Naive thymus-derived CD4-positive, alpha-beta T cell (primary cell): ENCODE measurements at regions of chr10 and their contacts with region 1.

Region 1: GRCh38 chr10:73743905-73744663 is at the start of gene SEC24C:
- DNase-seq: peak; percentile 87 to 97 (median 95)
- ATAC-seq: peak; percentile 93
- H3K4me3 ChIP-seq: peak within 1 kb of the TSS; percentile 93
- H3K4me3 Mint-ChIP-seq: peak within 1 kb of the TSS; percentile 92 to 100 (median 100)
- H3K27ac ChIP-seq: peak within 1 kb of the TSS; percentile 91
- H3K27ac Mint-ChIP-seq: peak within 1 kb of the TSS; percentile 98 to 100 (median 100)
- H3K4me1 ChIP-seq: peaks cover 22 to 27% of the 10 kb centered on the region in 2 donors
- H3K4me1 Mint-ChIP-seq: peaks cover 18 to 47% (median 39%) of the 10 kb centered on the region in 7 donors
- H3K27me3 ChIP-seq: no peaks in the 10 kb centered on the region
- H3K27me3 Mint-ChIP-seq: no peaks in the 10 kb centered on the region
- total RNA-seq, gene SEC24C: 68.7 to 122 (median 95.4) TPM

Region 2: GRCh38 chr10:73246783-73247508 is 497.1 kb before region 1 on chr10 and contains the start of gene DNAJC9:
- CTCF ChIA-PET with region 1: no interaction called
- POLR2A ChIA-PET with region 1: no interaction called
- intact Hi-C with region 1: loop called (anchors 1 to 5 kb)
- DNase-seq: peak; percentile 93 to 98 (median 96)
- ATAC-seq: peak; percentile 95
- H3K4me3 ChIP-seq: peak within 1 kb of the TSS; percentile 71
- H3K4me3 Mint-ChIP-seq: peak within 1 kb of the TSS; percentile 92 to 100 (median 97)
- H3K27ac ChIP-seq: peak within 1 kb of the TSS; percentile 86
- H3K27ac Mint-ChIP-seq: peak within 1 kb of the TSS; percentile 91 to 98 (median 96)
- H3K4me1 ChIP-seq: peaks cover 27 to 37% of the 10 kb centered on the region in 2 donors
- H3K4me1 Mint-ChIP-seq: peaks cover 30 to 69% (median 55%) of the 10 kb centered on the region in 7 donors
- H3K27me3 ChIP-seq: no peaks in the 10 kb centered on the region
- H3K27me3 Mint-ChIP-seq: no peaks in the 10 kb centered on the region
- total RNA-seq, gene DNAJC9: 14.5 to 47.7 (median 26.8) TPM

Region 3: DNA sequence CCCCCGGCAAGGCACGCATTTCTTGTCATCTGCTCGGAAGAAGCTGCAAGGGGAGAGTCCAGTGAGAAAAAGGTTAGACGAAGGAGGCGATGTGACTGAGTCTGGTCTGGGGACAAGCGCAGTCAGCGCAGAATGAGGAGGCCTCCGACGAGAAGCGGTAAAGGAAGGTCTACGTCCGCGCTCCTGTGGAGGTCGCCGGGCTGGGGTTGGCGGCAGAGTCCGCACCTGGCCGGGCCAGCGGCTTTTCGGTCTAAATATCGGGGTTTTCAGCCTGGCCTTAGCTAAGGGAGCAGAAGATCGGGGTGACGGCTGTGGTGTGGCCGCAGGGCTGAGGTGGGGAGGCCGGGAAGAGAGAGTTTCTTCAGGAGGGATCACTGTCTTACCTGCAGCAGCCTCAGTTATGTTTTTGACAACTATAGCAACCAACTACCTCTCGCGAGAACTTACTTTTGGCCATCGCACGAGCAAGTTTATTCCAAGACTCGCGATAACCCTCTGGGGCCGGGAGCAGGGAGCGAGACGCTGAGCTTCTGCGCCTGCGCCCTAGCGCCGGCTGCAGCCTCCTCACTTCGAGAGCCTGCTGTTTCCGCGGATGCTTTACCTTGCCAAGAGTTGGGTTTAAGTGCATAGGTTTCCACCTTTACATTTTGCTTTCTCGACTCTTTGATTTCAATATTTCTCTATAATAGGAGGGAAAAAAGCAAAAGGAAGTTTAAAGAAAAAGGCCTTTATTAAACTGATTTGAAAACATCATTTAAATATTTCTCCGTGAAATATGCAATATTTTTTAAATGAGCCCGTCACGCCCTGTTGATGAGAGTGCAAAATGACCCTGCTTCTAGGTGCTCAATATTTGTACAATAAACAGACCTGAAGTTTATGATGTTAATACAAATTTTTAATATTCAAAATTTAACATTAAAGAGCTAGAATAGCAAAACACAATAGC is 385.5 kb before region 1 on chr10 and contains the start of gene CFAP70:
- CTCF ChIA-PET with region 1: no interaction called
- POLR2A ChIA-PET with region 1: no interaction called
- intact Hi-C with region 1: loop called in 1 of 2 experiments (anchors 5 kb)
- DNase-seq: peak; percentile 79 to 97 (median 95)
- ATAC-seq: peak; percentile 97
- H3K4me3 ChIP-seq: peak within 1 kb of the TSS; percentile 70
- H3K4me3 Mint-ChIP-seq: peak within 1 kb of the TSS; percentile 91 to 99 (median 94)
- H3K27ac ChIP-seq: peak within 1 kb of the TSS; percentile 85
- H3K27ac Mint-ChIP-seq: peak within 1 kb of the TSS; percentile 92 to 99 (median 97)
- H3K4me1 ChIP-seq: peaks cover 4 to 5% of the 10 kb centered on the region in 2 donors
- H3K4me1 Mint-ChIP-seq: peaks cover 11 to 20% (median 18%) of the 10 kb centered on the region in 7 donors
- H3K27me3 ChIP-seq: no peaks in the 10 kb centered on the region
- H3K27me3 Mint-ChIP-seq: peaks cover 0 to 23% (median 0%) of the 10 kb centered on the region in 5 donors
- total RNA-seq, gene CFAP70: 0.80 to 5.4 (median 4.6) TPM

Region 4: DNA sequence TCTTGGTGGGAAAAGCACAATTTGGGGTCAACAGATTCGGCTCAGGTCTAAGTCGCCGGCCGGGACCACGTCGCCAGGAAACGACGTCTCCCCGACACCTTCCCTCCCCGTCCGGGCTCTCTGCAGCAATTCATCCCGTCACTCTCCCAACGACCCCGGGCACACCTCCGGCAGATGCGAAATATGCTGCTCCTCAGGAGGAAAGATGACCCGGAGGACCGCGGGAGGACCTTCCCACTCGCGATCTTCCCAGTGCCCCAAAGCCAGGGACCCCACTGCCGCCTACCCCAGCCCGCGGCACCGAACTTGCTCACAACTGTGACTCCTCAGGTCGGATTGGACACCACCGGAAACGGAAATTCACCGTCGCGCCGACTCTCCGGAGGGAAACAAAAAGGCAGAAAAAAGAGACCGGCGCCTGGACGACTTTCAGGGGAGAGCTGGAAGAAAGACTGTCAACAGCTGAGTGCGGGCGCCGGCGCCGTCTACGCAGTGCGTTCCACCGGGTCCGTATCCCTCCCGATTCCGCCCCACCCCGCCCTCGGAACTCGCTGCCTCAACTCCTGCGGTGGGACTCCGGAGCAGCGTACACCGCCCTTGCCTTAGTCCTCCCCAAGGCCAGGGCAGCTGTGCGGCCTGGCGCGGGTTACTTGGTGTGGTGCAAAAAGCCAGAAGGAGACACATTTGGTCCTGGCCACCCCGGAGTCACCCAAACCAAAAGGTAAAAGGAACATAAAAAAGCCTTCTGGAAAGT is 13.8 kb before region 1 on chr10:
- CTCF ChIA-PET with region 1: interaction called, 9 read pairs
- POLR2A ChIA-PET with region 1: interaction called, 79 read pairs
- intact Hi-C with region 1: loop called (anchors 1 kb)
- DNase-seq: peak; percentile 86 to 94 (median 89)
- ATAC-seq: peak; percentile 94
- H3K4me3 ChIP-seq: peak overlapping the region; percentile 99
- H3K4me3 Mint-ChIP-seq: peak overlapping the region; percentile 95 to 100 (median 98)
- H3K27ac ChIP-seq: peak overlapping the region; percentile 82
- H3K27ac Mint-ChIP-seq: peak overlapping the region; percentile 91 to 98 (median 96)
- H3K4me1 ChIP-seq: peaks cover 5 to 10% of the 10 kb centered on the region in 2 donors
- H3K4me1 Mint-ChIP-seq: peaks cover 0 to 32% (median 21%) of the 10 kb centered on the region in 7 donors
- H3K27me3 ChIP-seq: no peaks in the 10 kb centered on the region
- H3K27me3 Mint-ChIP-seq: no peaks in the 10 kb centered on the region

Region 5: DNA sequence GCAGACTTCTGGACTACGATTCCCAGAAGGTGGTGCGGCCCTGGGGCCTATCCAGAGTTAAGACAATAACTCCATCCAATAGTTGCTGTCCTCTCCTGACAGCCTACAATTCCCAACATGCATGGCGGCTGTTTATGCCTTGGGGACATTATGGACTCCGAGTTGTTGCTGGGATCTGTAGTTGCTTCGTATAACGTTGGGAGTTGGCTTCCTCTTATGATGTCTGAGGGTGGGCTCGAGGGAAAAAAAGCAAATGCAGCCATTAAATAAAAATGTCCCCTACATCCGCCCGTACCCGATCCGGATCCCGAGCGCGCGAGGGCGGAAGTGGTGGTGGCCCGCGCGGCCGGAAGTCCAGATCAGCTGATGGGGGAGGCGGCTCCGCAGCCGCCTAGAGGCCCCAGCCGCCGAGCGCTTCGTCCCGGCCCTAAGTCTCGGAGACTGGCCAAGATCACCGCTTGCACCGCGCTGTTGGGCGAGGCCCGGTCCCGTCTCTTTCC is 41.2 kb after region 1 on chr10 and contains the start of gene ZSWIM8:
- CTCF ChIA-PET with region 1: no interaction called
- POLR2A ChIA-PET with region 1: interaction called, 26 read pairs
- intact Hi-C with region 1: loop called (anchors 1 kb)
- DNase-seq: peak; percentile 70 to 93 (median 86)
- ATAC-seq: peak; percentile 91
- H3K4me3 ChIP-seq: peak within 1 kb of the TSS; percentile 91
- H3K4me3 Mint-ChIP-seq: peak within 1 kb of the TSS; percentile 97 to 100 (median 98)
- H3K27ac ChIP-seq: peak within 1 kb of the TSS; percentile 83
- H3K27ac Mint-ChIP-seq: peak within 1 kb of the TSS; percentile 95 to 99 (median 98)
- H3K4me1 ChIP-seq: peaks cover 36 to 43% of the 10 kb centered on the region in 2 donors
- H3K4me1 Mint-ChIP-seq: peaks cover 27 to 66% (median 53%) of the 10 kb centered on the region in 7 donors
- H3K27me3 ChIP-seq: no peaks in the 10 kb centered on the region
- H3K27me3 Mint-ChIP-seq: no peaks in the 10 kb centered on the region
- total RNA-seq, gene ZSWIM8: 70.9 to 102 (median 83.2) TPM

Region 6: GRCh38 chr10:73874267-73875138 is 130.4 kb after region 1 on chr10 and contains the start of gene CAMK2G:
- CTCF ChIA-PET with region 1: no interaction called
- POLR2A ChIA-PET with region 1: interaction called, 6 read pairs
- intact Hi-C with region 1: loop called in 1 of 2 experiments (anchors 1 kb)
- DNase-seq: peak; percentile 68 to 86 (median 83)
- ATAC-seq: peak; percentile 91
- H3K4me3 ChIP-seq: peak within 1 kb of the TSS; percentile 94
- H3K4me3 Mint-ChIP-seq: peak within 1 kb of the TSS; percentile 83 to 96 (median 90)
- H3K27ac ChIP-seq: peak within 1 kb of the TSS; percentile 86
- H3K27ac Mint-ChIP-seq: peak within 1 kb of the TSS; percentile 81 to 97 (median 94)
- H3K4me1 ChIP-seq: peaks cover 30 to 48% of the 10 kb centered on the region in 2 donors
- H3K4me1 Mint-ChIP-seq: peaks cover 41 to 84% (median 74%) of the 10 kb centered on the region in 7 donors
- H3K27me3 ChIP-seq: no peaks in the 10 kb centered on the region
- H3K27me3 Mint-ChIP-seq: peaks cover 0 to 2% (median 0%) of the 10 kb centered on the region in 5 donors
- total RNA-seq, gene CAMK2G: 44.6 to 70.9 (median 61.9) TPM

Region 7: GRCh38 chr10:75210282-75211006 is 1466.4 kb after region 1 on chr10 and contains the start of gene VDAC2:
- CTCF ChIA-PET with region 1: no interaction called
- POLR2A ChIA-PET with region 1: no interaction called
- intact Hi-C with region 1: loop called in 1 of 2 experiments (anchors 10 kb)
- DNase-seq: peak; percentile 92 to 100 (median 98)
- ATAC-seq: peak; percentile 92
- H3K4me3 ChIP-seq: peak within 1 kb of the TSS; percentile 81
- H3K4me3 Mint-ChIP-seq: peak within 1 kb of the TSS; percentile 87 to 100 (median 98)
- H3K27ac ChIP-seq: peak within 1 kb of the TSS; percentile 96
- H3K27ac Mint-ChIP-seq: peak within 1 kb of the TSS; percentile 99 to 100 (median 100)
- H3K4me1 ChIP-seq: peaks cover 15 to 21% of the 10 kb centered on the region in 2 donors
- H3K4me1 Mint-ChIP-seq: peaks cover 21 to 44% (median 29%) of the 10 kb centered on the region in 7 donors
- H3K27me3 ChIP-seq: no peaks in the 10 kb centered on the region
- H3K27me3 Mint-ChIP-seq: no peaks in the 10 kb centered on the region
- total RNA-seq, gene VDAC2: 82.8 to 138 (median 121) TPM